ENCODE measurements at regions of chr1 and their contacts with region 1.

Region 1: GRCh38 chr1:6784560-6785317 is 515 bp upstream of the CAMTA1 start:
- DNase-seq: peak; percentile 99
- ATAC-seq: peak; percentile 92
- H3K4me3 ChIP-seq: peak overlapping the region; percentile 88
- H3K27ac ChIP-seq: peak overlapping the region; percentile 90
- H3K4me1 ChIP-seq: peaks cover 3% of the 10 kb centered on the region
- H3K27me3 ChIP-seq: no peaks in the 10 kb centered on the region
- CTCF ChIP-seq: no peak
- EP300 ChIP-seq: peak in 1 of 2 experiments; percentile 44; a peak in 3 of 4 replicates
- POLR2A ChIP-seq: peak; percentile 85
- RAD21 ChIP-seq: no peak

Region 2: GRCh38 chr1:6613361-6614018 is 171.2 kb before region 1 on chr1 and contains the start of gene PHF13:
- CTCF ChIA-PET with region 1: no interaction called
- POLR2A ChIA-PET with region 1: interaction called, 3 read pairs
- RAD21 ChIA-PET with region 1: no interaction called
- SMC1A ChIA-PET with region 1: no interaction called
- in situ Hi-C with region 1: no loop called
- intact Hi-C with region 1: loop called (anchors 10 kb)
- DNase-seq: peak; percentile 92
- ATAC-seq: peak; percentile 96
- H3K4me3 ChIP-seq: peak within 1 kb of the TSS; percentile 98
- H3K27ac ChIP-seq: peak within 1 kb of the TSS; percentile 51
- H3K4me1 ChIP-seq: no peaks in the 10 kb centered on the region
- H3K27me3 ChIP-seq: no peaks in the 10 kb centered on the region
- CTCF ChIP-seq: no peak
- EP300 ChIP-seq: no peak; a peak in 1 of 4 replicates
- POLR2A ChIP-seq: peak; percentile 71
- RAD21 ChIP-seq: no peak
- polyA plus RNA-seq, gene PHF13: 0.87 to 1.9 TPM

Region 3: GRCh38 chr1:6935361-6935883 is 150.7 kb after region 1 on chr1:
- CTCF ChIA-PET with region 1: no interaction called
- POLR2A ChIA-PET with region 1: no interaction called
- RAD21 ChIA-PET with region 1: no interaction called
- SMC1A ChIA-PET with region 1: no interaction called
- in situ Hi-C with region 1: no loop called
- intact Hi-C with region 1: no loop called
- DNase-seq: no peak
- ATAC-seq: no peak
- H3K4me3 ChIP-seq: no peak overlapping the region
- H3K27ac ChIP-seq: no peak overlapping the region
- H3K4me1 ChIP-seq: no peaks in the 10 kb centered on the region
- H3K27me3 ChIP-seq: peaks cover 2 to 14% of the 10 kb centered on the region in 2 experiments; a peak in 3 of 4 replicates
- CTCF ChIP-seq: no peak
- EP300 ChIP-seq: no peak
- POLR2A ChIP-seq: no peak
- RAD21 ChIP-seq: no peak

Measured in GM12878 (cell line).